ENCODE measurements at regions of chr13 and their contacts with region 1.

Region 1: DNA sequence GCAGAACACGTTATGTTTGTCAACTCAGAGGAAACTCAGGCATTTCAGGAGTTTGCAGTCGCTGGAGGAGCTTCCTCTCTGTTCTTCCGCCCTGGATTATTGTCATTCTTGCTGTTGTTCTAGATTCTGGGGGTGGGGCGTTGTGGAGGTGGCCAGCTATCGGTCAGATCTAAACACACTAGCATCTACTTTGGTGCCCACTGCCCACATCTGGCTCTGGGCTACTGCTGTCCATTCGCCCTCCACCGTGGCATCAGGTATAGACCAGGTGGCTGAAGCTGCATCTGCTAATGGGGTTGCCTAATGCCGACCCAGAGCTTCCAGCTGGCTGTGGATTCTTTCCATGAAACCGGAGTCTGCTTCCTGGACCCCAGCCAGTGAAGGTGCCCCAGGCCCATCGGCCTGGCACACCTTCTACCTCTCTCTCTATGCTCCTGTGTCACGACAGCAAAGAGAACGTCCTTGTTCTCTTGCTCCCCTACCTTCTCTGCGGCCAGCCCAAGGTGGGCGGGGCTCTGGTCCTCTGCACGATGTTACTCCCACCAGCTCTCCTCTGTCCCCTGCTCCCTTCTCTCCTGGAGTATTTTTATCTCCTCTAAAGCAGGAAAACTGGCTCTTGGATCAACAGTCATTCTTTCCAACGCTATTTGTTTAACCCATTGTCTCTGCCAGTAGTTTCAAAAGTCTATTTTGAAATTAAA is 36.6 kb upstream of the DGKH start:
- DNase-seq: peak; percentile 12

Region 2: GRCh38 chr13:41649659-41650058 is 362.2 kb before region 1 on chr13:
- CTCF ChIA-PET with region 1: interaction called, 11 read pairs
- POLR2A ChIA-PET with region 1: no interaction called
- DNase-seq: peak; percentile 38

Region 3: GRCh38 chr13:42125046-42125445 is 113.2 kb after region 1 on chr13:
- CTCF ChIA-PET with region 1: no interaction called
- POLR2A ChIA-PET with region 1: no interaction called
- DNase-seq: no peak

Measured in HEK293T (cell line).